CD4-positive, alpha-beta T cell (primary cell): ENCODE measurements at regions of chr11 and their contacts with region 1.

Region 1: DNA sequence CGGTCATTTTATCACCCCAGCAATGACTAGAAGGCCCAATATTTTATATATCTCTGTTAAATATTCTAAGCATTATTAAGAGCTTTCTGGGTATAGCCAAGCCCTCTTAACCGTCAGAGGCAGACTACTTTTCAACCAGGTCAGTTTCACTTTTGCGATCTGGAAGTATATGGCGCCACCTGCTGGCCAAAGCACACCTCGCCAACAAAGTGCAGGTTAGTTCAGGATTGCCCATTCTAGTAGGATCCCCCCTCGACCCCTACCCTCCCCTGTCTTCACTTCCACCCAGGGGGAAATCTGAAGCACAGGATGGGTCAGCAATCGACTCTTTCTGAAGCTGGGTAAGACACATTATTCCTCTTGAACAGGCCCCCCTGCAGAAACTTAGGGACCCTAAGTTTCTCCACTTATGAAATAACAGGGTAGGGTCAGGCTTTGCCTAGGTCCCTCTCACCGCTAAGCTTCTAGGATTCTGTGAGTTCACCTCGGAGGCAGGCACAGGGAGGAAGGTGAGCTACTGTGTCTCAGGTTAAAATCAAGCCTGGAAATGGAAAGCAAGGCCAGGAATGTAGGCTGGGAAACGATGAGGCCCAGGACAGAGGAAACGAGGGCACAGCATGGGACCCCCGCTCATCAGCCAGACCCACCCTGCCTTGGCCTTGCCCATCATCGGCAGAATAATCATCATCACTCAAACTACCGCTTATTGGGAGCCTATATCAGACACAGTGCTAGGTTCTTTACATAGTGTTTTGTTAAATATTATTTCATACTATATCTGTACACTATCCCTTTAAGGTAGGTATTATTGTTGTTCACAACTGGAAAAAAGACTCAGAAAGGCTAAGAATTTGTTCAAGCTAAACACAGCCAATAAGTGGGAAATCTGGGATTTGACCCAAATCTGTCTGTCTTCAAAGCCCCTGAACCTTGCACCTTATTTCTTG is 35.6 kb downstream of the KCNJ1 start:
- DNase-seq: peak; percentile 74 to 94 (median 86)
- ATAC-seq: peak; percentile 75
- H3K4me3 ChIP-seq: peak overlapping the region; percentile 29
- H3K4me3 Mint-ChIP-seq: peak overlapping the region; percentile 85
- H3K27ac ChIP-seq: peak overlapping the region; percentile 55 to 74
- H3K27ac Mint-ChIP-seq: peak overlapping the region; percentile 83
- H3K4me1 ChIP-seq: peaks cover 17% of the 10 kb centered on the region
- H3K4me1 Mint-ChIP-seq: peaks cover 44% of the 10 kb centered on the region
- H3K27me3 ChIP-seq: no peaks in the 10 kb centered on the region
- H3K27me3 Mint-ChIP-seq: no peaks in the 10 kb centered on the region
- CTCF ChIP-seq: peak; percentile 93

Region 2: GRCh38 chr11:127843483-127844396 is 987.7 kb before region 1 on chr11:
- CTCF ChIA-PET with region 1: no interaction called
- POLR2A ChIA-PET with region 1: no interaction called
- intact Hi-C with region 1: loop called in 1 of 2 experiments (anchors 10 kb)
- DNase-seq: peak; percentile 22 to 60 (median 36)
- ATAC-seq: no peak
- H3K4me3 ChIP-seq: no peak overlapping the region
- H3K4me3 Mint-ChIP-seq: no peak overlapping the region
- H3K27ac ChIP-seq: no peak overlapping the region
- H3K27ac Mint-ChIP-seq: no peak overlapping the region
- H3K4me1 ChIP-seq: no peaks in the 10 kb centered on the region
- H3K4me1 Mint-ChIP-seq: no peaks in the 10 kb centered on the region
- H3K27me3 ChIP-seq: no peaks in the 10 kb centered on the region
- H3K27me3 Mint-ChIP-seq: peaks cover 12% of the 10 kb centered on the region
- CTCF ChIP-seq: peak; percentile 56

Region 3: GRCh38 chr11:128026596-128026995 is 804.9 kb before region 1 on chr11:
- CTCF ChIA-PET with region 1: interaction called, 5 read pairs
- POLR2A ChIA-PET with region 1: no interaction called
- intact Hi-C with region 1: loop called (anchors 1 to 2 kb)
- DNase-seq: peak in 1 of 14 experiments; percentile 41
- ATAC-seq: no peak
- H3K4me3 ChIP-seq: no peak overlapping the region
- H3K4me3 Mint-ChIP-seq: no peak overlapping the region
- H3K27ac ChIP-seq: no peak overlapping the region
- H3K27ac Mint-ChIP-seq: no peak overlapping the region
- H3K4me1 ChIP-seq: peaks cover under 1% of the 10 kb centered on the region
- H3K4me1 Mint-ChIP-seq: peaks cover 4% of the 10 kb centered on the region
- H3K27me3 ChIP-seq: peaks cover 0 to 3% of the 10 kb centered on the region in 2 experiments
- H3K27me3 Mint-ChIP-seq: peaks cover 3% of the 10 kb centered on the region
- CTCF ChIP-seq: no peak

Region 4: DNA sequence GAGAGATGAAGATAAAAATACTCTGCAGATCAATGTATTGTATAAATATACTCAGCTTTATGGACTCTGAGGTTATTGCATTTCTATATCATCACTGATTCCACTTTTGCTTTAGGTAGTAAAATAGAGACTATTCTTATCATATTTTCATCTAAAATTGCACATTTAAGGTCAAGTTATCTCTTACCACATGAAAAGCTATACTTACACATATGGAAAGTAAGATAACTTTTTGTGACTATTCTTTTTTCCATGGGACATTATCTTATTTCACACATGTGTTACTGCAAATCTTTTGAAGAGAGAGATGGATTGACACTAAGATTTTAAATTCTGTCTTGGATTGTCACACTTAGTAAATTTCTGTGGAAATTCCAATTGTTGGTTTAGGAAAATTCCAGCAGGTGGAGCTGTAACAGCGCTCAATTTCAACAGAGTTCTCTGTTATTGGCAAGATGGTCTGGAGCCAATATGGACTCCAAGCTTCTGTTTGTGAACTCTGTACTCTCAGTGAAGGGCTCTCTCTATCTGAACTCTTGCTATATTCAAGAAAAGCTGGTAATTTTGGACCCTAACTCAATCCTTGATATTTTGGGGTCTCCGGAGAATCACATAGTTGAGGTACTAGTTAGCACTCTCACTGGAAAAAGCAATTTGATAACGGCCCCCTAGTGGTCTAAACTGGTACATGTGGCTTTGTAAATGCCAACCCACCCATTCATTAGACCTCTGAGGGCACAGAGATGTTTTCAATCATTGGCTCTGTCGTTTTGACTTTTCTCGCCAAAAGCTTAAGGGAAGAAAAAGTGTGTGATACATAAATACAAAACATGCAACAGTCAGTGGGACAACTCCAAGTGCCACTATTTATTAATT is 673.8 kb before region 1 on chr11:
- CTCF ChIA-PET with region 1: interaction called, 23 read pairs
- POLR2A ChIA-PET with region 1: interaction called, 11 read pairs
- intact Hi-C with region 1: loop called (anchors 2 to 5 kb)
- DNase-seq: peak in 13 of 14 experiments; percentile 9 to 84 (median 41)
- ATAC-seq: peak; percentile 94
- H3K4me3 ChIP-seq: peak overlapping the region; percentile 37
- H3K4me3 Mint-ChIP-seq: peak overlapping the region; percentile 87
- H3K27ac ChIP-seq: no peak overlapping the region
- H3K27ac Mint-ChIP-seq: peak overlapping the region; percentile 24
- H3K4me1 ChIP-seq: no peaks in the 10 kb centered on the region
- H3K4me1 Mint-ChIP-seq: peaks cover 8% of the 10 kb centered on the region
- H3K27me3 ChIP-seq: no peaks in the 10 kb centered on the region
- H3K27me3 Mint-ChIP-seq: no peaks in the 10 kb centered on the region
- CTCF ChIP-seq: peak; percentile 100

Region 5: GRCh38 chr11:128172046-128172878 is 659.2 kb before region 1 on chr11:
- CTCF ChIA-PET with region 1: interaction called, 23 read pairs
- POLR2A ChIA-PET with region 1: interaction called, 6 read pairs
- intact Hi-C with region 1: loop called (anchors 1 kb)
- DNase-seq: peak; percentile 73 to 92 (median 84)
- ATAC-seq: peak; percentile 83
- H3K4me3 ChIP-seq: no peak overlapping the region
- H3K4me3 Mint-ChIP-seq: no peak overlapping the region
- H3K27ac ChIP-seq: no peak overlapping the region
- H3K27ac Mint-ChIP-seq: no peak overlapping the region
- H3K4me1 ChIP-seq: no peaks in the 10 kb centered on the region
- H3K4me1 Mint-ChIP-seq: peaks cover 6% of the 10 kb centered on the region
- H3K27me3 ChIP-seq: no peaks in the 10 kb centered on the region
- H3K27me3 Mint-ChIP-seq: no peaks in the 10 kb centered on the region
- CTCF ChIP-seq: peak; percentile 91

Region 6: DNA sequence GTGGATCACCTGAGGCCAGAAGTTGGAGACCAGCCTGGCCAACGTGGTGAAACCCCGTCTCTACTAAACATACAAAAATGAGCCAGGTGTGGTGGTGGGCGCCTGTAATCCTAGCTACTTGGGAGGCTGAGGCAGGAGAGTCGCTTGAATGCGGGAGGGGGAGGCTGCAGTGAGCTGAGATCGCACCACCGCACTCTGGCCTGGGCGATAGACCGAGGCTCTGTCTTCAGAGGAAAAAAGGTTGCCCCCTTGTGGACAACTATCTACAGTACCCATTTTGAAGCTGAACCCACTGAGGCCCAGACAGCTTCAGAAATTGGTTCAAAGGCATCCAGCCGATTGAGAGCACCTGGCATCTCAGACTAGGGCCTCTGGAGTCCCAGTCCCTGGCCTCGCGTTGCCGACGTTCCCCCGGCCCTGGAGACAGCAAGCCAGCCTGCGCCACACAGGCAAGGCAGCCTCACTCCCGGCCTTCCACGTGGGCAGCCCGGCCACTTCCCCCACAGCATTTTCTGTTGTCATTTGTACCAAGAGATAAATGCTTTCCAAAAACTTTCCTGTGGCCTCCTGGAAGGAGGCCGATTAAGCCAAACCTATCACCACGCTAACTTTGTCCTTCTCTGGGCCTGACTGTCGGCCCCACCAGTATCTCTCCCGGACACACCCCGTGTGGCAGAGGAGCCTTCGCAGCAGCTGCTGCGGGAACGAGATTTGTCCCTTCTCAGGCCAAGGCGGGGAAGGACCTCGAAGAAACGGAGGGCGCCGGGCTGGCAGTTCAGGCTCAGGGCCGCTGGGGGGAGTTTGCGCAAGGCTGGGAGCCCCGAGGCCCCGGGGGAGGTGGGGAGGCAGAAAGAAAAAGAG is 54.8 kb before region 1 on chr11:
- CTCF ChIA-PET with region 1: interaction called, 11 read pairs
- POLR2A ChIA-PET with region 1: no interaction called
- intact Hi-C with region 1: loop called in 1 of 2 experiments (anchors 5 kb)
- DNase-seq: peak in 11 of 14 experiments; percentile 12 to 80 (median 17)
- ATAC-seq: peak; percentile 64
- H3K4me3 ChIP-seq: no peak overlapping the region
- H3K4me3 Mint-ChIP-seq: peak overlapping the region; percentile 14
- H3K27ac ChIP-seq: no peak overlapping the region
- H3K27ac Mint-ChIP-seq: peak overlapping the region; percentile 50
- H3K4me1 ChIP-seq: peaks cover 51% of the 10 kb centered on the region
- H3K4me1 Mint-ChIP-seq: peaks cover 76% of the 10 kb centered on the region
- H3K27me3 ChIP-seq: no peaks in the 10 kb centered on the region
- H3K27me3 Mint-ChIP-seq: no peaks in the 10 kb centered on the region
- CTCF ChIP-seq: peak; percentile 57

Region 7: GRCh38 chr11:128848815-128849455 is 17.5 kb after region 1 on chr11:
- CTCF ChIA-PET with region 1: interaction called, 5 read pairs
- POLR2A ChIA-PET with region 1: interaction called, 17 read pairs
- intact Hi-C with region 1: no loop called
- DNase-seq: peak; percentile 40 to 78 (median 60)
- ATAC-seq: peak; percentile 70
- H3K4me3 ChIP-seq: no peak overlapping the region
- H3K4me3 Mint-ChIP-seq: no peak overlapping the region
- H3K27ac ChIP-seq: no peak overlapping the region
- H3K27ac Mint-ChIP-seq: no peak overlapping the region
- H3K4me1 ChIP-seq: peaks cover 29% of the 10 kb centered on the region
- H3K4me1 Mint-ChIP-seq: peaks cover 43% of the 10 kb centered on the region
- H3K27me3 ChIP-seq: no peaks in the 10 kb centered on the region
- H3K27me3 Mint-ChIP-seq: no peaks in the 10 kb centered on the region
- CTCF ChIP-seq: peak; percentile 69

Region 8: GRCh38 chr11:129041611-129042018 is 210.2 kb after region 1 on chr11:
- CTCF ChIA-PET with region 1: no interaction called
- POLR2A ChIA-PET with region 1: no interaction called
- intact Hi-C with region 1: no loop called
- DNase-seq: no peak
- ATAC-seq: no peak
- H3K4me3 ChIP-seq: no peak overlapping the region
- H3K4me3 Mint-ChIP-seq: no peak overlapping the region
- H3K27ac ChIP-seq: no peak overlapping the region
- H3K27ac Mint-ChIP-seq: no peak overlapping the region
- H3K4me1 ChIP-seq: no peaks in the 10 kb centered on the region
- H3K4me1 Mint-ChIP-seq: no peaks in the 10 kb centered on the region
- H3K27me3 ChIP-seq: no peaks in the 10 kb centered on the region
- H3K27me3 Mint-ChIP-seq: no peaks in the 10 kb centered on the region
- CTCF ChIP-seq: no peak